GM12878 (cell line): ENCODE measurements at regions of chr17 and their contacts with region 1.

Region 1: GRCh38 chr17:10976401-10976800 is 138.5 kb upstream of the PIRT start:
- DNase-seq: no peak
- ATAC-seq: no peak
- H3K4me3 ChIP-seq: no peak overlapping the region
- H3K27ac ChIP-seq: no peak overlapping the region
- H3K4me1 ChIP-seq: no peaks in the 10 kb centered on the region
- H3K27me3 ChIP-seq: no peaks in the 10 kb centered on the region
- CTCF ChIP-seq: no peak
- EP300 ChIP-seq: no peak
- POLR2A ChIP-seq: no peak
- RAD21 ChIP-seq: no peak

Region 2: GRCh38 chr17:10907370-10907769 is 69.0 kb before region 1 on chr17:
- CTCF ChIA-PET with region 1: no interaction called
- POLR2A ChIA-PET with region 1: no interaction called
- RAD21 ChIA-PET with region 1: no interaction called
- SMC1A ChIA-PET with region 1: no interaction called
- in situ Hi-C with region 1: no loop called
- intact Hi-C with region 1: loop called (anchors 10 kb)
- DNase-seq: no peak
- ATAC-seq: no peak
- H3K4me3 ChIP-seq: no peak overlapping the region
- H3K27ac ChIP-seq: no peak overlapping the region
- H3K4me1 ChIP-seq: no peaks in the 10 kb centered on the region
- H3K27me3 ChIP-seq: no peaks in the 10 kb centered on the region
- CTCF ChIP-seq: no peak
- EP300 ChIP-seq: no peak
- POLR2A ChIP-seq: no peak
- RAD21 ChIP-seq: no peak